ENCODE measurements at regions of chr4 and their contacts with region 1.

Region 1: DNA sequence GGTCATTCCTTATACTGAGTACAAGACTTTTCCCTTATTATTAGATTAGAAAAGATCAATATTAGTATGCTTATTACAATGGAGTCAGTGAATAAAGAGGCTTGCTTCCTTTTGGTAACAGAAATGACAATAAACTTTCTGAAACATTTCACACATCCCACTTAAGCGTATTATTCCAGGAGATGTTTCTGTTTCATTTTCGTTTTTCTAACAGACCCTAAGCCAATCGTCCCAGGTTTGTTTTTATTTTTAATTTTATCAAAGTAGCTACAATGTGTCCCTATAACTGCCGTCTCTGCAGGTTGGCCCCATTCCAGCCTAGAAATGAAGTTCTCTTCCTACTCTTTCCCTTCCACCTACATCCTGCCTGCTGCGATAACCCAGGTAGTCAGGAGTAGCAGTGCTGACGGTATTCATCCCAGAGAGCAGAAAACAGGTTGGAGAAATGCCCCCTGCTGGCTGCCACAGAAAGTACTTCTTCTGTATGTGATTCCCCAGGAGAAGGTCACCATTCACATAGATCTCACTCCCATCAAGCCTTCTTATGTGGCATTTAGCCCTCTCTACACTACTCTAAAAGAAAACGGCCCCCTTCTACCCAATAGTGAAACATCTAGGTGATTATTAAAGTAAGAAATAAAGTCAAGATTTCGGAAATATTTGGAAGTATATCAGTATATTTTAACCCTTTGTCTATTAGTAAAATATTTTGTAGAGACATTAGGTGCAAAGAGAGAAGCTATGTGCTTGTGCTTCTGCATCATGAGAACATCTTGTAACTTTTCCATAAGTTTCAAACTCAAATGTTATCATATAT is 40.4 kb downstream of the ENPEP start:
- DNase-seq: no peak
- H3K4me3 ChIP-seq: peak overlapping the region; percentile 29
- CTCF ChIP-seq: peak; percentile 87

Region 2: GRCh38 chr4:110049951-110050925 is 466.1 kb before region 1 on chr4:
- in situ Hi-C with region 1: loop called (anchors 25 kb)
- DNase-seq: peak; percentile 31
- H3K4me3 ChIP-seq: no peak overlapping the region
- CTCF ChIP-seq: peak; percentile 87

Region 3: DNA sequence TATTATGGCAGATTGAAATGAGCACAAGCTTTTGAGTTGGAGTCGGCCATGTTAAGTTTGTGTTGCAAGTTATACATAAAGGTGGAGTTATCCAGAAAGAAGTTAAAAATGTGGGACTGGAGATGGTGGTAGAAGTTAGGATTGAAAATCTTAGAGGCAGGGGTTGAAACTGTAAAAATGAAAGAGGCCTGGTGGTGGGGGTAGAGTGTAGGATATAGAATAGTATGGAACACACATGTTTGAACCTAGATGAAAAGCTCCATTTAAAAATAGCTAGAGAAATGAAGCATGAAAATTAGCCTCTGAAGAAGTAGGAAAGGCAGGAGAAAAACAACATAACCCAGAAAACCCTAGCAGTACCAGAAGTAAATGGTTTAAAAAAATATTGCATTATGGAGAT is 172.2 kb before region 1 on chr4:
- in situ Hi-C with region 1: loop called (anchors 10 kb)
- DNase-seq: peak; percentile 11
- H3K4me3 ChIP-seq: no peak overlapping the region
- CTCF ChIP-seq: peak; percentile 35

Region 4: DNA sequence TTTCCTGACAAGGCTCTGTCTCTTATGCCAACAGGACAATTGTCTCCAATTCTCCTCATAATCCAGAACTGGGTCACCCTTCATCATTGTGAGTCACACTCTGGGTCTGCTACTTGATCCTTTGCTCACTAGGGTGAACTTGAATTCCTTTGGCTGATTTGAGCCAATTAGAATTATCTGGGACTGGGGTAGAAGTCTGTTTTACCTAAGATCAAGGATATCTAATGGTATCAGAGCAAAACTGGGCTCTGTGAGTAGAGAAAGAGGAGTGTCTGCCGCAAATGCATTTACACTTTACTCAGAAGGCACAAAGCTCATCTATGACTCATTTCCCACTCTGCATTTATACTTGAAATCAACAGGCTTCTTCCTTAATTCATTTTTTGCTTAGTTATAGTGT is 33.9 kb after region 1 on chr4:
- in situ Hi-C with region 1: no loop called
- DNase-seq: no peak
- H3K4me3 ChIP-seq: no peak overlapping the region
- CTCF ChIP-seq: no peak

Region 5: DNA sequence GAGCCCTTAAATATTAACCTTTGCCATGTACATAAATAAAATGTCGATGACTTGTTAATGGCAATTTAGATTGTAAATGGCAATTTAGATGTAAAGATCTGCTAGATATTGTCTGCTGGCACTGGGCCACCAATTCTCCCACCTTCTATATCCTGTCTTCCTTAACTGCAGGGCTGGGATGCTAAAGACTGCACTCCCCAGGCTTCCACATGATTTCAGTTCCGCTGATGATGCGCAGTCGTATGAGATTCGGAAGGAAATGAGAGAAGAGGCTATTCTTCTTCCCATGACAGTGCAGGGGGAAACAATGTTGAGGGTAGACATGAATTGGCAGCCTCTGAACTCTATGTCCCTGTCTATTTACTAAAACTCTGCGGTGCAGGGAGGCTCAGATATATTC is 50.9 kb after region 1 on chr4:
- in situ Hi-C with region 1: no loop called
- DNase-seq: no peak
- H3K4me3 ChIP-seq: no peak overlapping the region
- CTCF ChIP-seq: no peak

Measured in astrocyte of the cerebellum (primary cell).